Sciatic nerve (tissue), 2 donors: ENCODE measurements at regions of chr9 and their contacts with region 1.

Region 1: DNA sequence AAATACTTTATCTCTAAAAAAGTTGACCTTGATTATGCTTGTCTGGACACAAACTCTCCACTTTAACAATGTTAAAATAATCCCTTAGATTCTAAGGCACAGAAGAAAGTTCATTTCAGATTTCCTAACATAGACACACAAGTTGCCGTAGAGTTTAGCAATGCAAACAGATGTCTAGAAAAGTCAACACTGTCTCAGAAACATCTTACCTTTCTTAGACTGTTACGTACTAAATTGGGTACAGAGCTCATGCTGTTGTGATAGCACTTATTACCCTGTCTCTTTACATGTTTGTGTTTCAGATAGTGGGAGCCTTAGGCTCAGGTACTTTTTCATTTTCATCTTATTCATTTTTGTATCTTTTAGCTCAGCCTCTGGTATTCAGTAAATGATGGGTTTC is 52.0 kb downstream of the C5 start:
- DNase-seq: no peak
- ATAC-seq: no peak

Region 2: DNA sequence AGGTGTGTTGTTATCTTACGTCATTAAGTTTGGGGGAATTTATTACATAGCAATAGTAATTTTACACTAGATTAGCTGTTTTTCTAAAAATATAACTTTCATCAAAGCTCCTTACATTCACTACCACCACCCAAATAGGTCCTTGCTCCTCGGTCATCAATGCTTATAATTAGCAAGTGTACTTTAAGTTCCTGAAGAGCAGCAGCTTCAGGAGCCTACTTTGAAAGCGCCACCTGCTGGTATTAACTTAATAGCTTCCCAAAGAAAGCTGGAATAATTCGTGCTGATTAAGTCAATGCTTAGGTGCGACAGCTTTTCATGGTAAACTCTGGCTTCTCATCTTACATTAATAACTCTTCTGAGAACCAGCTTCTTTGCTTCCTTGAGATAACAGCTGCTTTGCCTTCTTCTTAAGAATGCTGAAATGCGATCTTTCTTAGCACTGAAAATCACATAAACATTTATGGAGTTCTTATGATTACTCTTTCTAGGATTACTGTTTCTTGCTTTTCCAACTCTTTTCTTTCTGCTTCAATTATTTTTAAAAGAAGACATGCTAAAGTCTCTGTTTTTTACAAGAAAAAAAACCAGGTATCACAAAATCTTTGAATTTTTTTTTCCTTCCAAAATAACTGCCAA is 62.0 kb after region 1 on chr9:
- intact Hi-C with region 1: loop called (anchors 10 kb)
- DNase-seq: no peak
- ATAC-seq: peak; percentile 48